Dendritic cell treated with granulocyte-macrophage colony-stimulating factor and Interleukin-4, amounts not matched to agents 40 ng/mL and 50 ng/mL, for 4 days (primary cell): ENCODE measurements at regions of chr10 and their contacts with region 1.

Region 1: DNA sequence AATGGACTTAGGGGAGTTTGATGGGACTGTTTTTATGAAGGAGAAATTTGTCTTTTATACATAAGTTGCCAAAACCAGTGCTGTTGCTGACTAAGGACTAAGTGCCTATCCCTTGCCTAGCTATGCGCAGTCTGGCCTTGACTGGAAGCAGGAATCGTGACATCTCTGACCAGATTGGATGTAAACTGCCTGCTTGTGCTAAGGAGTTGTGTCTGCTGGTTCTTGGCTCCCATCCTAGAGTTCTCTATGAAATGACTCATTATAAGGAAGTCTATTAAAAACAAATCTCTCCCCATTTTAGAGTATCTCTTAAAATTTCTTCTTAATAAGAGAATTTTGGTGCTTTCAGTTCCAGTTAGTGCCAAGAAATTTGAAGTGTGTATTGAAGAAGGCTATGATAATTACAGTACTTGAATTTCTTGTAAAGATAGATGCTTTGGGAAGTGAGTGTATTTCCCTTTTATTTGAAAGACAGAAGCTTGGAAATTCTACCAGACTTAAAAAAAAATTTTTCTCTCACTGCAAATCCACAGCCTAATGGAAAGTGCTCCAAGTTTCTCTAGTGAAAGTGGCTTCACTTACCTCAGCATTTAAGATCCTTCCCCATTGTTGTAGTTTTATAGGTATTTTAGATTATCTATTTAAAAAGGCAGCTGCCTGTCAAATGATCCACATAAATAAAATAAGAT is 77.6 kb downstream of the BICC1 start:
- H3K4me3 Mint-ChIP-seq: no peak overlapping the region
- H3K27ac Mint-ChIP-seq: peak overlapping the region; percentile 32
- H3K4me1 Mint-ChIP-seq: peaks cover 67% of the 10 kb centered on the region
- H3K27me3 Mint-ChIP-seq: no peaks in the 10 kb centered on the region

Region 2: GRCh38 chr10:58555170-58555929 is 34.9 kb before region 1 on chr10:
- intact Hi-C with region 1: no loop called
- H3K4me3 Mint-ChIP-seq: no peak overlapping the region
- H3K27ac Mint-ChIP-seq: no peak overlapping the region
- H3K4me1 Mint-ChIP-seq: no peaks in the 10 kb centered on the region
- H3K27me3 Mint-ChIP-seq: no peaks in the 10 kb centered on the region

Region 3: GRCh38 chr10:58577437-58577777 is 12.9 kb before region 1 on chr10:
- intact Hi-C with region 1: loop called (anchors 1 kb)
- H3K4me3 Mint-ChIP-seq: no peak overlapping the region
- H3K27ac Mint-ChIP-seq: peak overlapping the region; percentile 74
- H3K4me1 Mint-ChIP-seq: peaks cover 27% of the 10 kb centered on the region
- H3K27me3 Mint-ChIP-seq: no peaks in the 10 kb centered on the region

Region 4: GRCh38 chr10:58641095-58641531 is 50.8 kb after region 1 on chr10:
- intact Hi-C with region 1: loop called (anchors 5 kb)
- H3K4me3 Mint-ChIP-seq: peak overlapping the region; percentile 49
- H3K27ac Mint-ChIP-seq: no peak overlapping the region
- H3K4me1 Mint-ChIP-seq: peaks cover 11% of the 10 kb centered on the region
- H3K27me3 Mint-ChIP-seq: no peaks in the 10 kb centered on the region